Activated CD8-positive, alpha-beta memory T cell treated with anti-CD3 and anti-CD28 coated beads, Interleukin-2, amount 10 ng/mL, durations not matched to agents 7 days and 5 days (primary cell): ENCODE measurements at regions of chr18 and their contacts with region 1.

Region 1: GRCh38 chr18:3151399-3152264 is 68.1 kb downstream of the MYOM1 start:
- DNase-seq: no peak
- ATAC-seq: no peak
- H3K4me3 Mint-ChIP-seq: no peak overlapping the region
- H3K27ac Mint-ChIP-seq: no peak overlapping the region
- H3K4me1 Mint-ChIP-seq: peaks cover 1% of the 10 kb centered on the region
- H3K27me3 Mint-ChIP-seq: no peaks in the 10 kb centered on the region

Region 2: GRCh38 chr18:2923464-2923863 is 228.2 kb before region 1 on chr18:
- CTCF ChIA-PET with region 1: interaction called, 12 read pairs
- DNase-seq: no peak
- ATAC-seq: no peak
- H3K4me3 Mint-ChIP-seq: no peak overlapping the region
- H3K27ac Mint-ChIP-seq: no peak overlapping the region
- H3K4me1 Mint-ChIP-seq: no peaks in the 10 kb centered on the region
- H3K27me3 Mint-ChIP-seq: no peaks in the 10 kb centered on the region

Region 3: GRCh38 chr18:3129053-3129864 is 22.4 kb before region 1 on chr18:
- CTCF ChIA-PET with region 1: interaction called, 19 read pairs
- DNase-seq: peak; percentile 87
- ATAC-seq: peak; percentile 97
- H3K4me3 Mint-ChIP-seq: no peak overlapping the region
- H3K27ac Mint-ChIP-seq: no peak overlapping the region
- H3K4me1 Mint-ChIP-seq: peaks cover 12% of the 10 kb centered on the region
- H3K27me3 Mint-ChIP-seq: no peaks in the 10 kb centered on the region

Region 4: DNA sequence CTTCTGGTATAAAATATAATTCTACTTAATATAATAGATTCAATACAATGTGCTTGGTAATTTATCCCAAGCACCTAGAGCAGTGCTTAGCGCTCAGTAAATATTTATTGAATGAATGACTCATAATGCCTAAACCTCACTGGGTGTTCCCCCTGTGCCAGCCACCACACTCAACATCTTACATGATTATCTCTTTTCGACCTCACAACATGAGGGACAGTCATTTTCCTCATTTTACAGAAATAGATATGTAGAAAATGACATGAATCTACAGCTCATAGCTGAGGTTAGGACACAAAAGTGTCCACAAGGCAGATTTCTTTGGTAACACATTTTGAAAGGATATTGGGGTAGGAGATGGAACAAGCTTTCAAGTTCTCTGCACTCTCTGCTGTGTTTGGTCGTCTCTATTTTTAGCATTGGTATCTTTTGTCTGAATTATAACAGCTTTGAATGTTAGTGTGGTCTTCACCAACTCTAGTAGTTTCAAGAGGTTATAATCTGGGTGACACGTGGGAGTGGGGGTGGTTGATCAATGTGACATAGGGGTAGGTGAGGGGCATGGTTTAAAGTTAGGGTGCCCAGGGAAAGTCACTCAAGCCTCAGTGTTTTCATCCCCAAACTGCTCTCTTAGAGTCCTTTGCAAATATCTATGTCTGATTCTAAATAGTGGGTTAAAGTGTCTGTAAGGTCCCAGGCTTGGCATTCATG is 58.4 kb after region 1 on chr18:
- CTCF ChIA-PET with region 1: no interaction called
- DNase-seq: peak; percentile 46
- ATAC-seq: peak; percentile 68
- H3K4me3 Mint-ChIP-seq: no peak overlapping the region
- H3K27ac Mint-ChIP-seq: no peak overlapping the region
- H3K4me1 Mint-ChIP-seq: peaks cover 19% of the 10 kb centered on the region
- H3K27me3 Mint-ChIP-seq: no peaks in the 10 kb centered on the region

Region 5: DNA sequence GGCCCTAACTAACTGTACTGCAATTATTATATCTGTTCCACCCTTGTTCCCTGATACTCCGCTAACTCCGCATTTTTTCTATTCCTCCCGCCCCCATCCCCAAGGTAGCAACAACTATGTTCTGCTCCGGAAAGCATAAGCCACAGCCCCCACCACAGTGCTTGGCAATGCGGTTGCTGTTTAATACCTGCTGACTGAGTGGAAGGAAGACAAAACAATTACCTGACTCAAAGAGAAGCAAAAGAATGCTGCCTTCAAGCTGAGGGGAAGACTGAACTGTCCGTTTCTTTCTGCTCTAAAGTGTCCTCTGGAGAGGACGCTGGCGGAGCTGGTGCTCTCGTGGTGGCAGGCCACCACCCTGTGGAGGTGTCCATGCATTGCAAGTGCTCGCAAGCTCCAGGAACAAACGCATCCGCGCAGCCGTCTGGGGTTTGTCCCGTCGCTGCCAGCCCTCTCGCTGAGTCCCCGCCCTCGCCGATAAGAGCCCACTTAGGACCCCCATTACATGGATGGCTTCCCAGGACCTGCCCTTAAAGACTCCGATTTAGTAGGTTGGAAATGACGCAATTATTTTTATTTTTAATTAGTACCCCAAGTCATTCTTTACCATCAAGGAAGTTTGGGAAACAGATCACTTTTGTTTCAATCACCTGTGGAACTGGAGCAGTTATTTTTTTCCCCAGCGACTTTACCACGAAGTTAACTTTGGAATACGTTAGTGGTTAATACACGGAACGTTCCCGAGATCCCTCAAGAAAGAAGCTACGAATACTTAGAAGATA is 94.4 kb after region 1 on chr18:
- CTCF ChIA-PET with region 1: interaction called, 34 read pairs
- DNase-seq: peak; percentile 90
- ATAC-seq: peak; percentile 56
- H3K4me3 Mint-ChIP-seq: peak overlapping the region; percentile 92
- H3K27ac Mint-ChIP-seq: peak overlapping the region; percentile 99
- H3K4me1 Mint-ChIP-seq: peaks cover 24% of the 10 kb centered on the region
- H3K27me3 Mint-ChIP-seq: peaks cover 4% of the 10 kb centered on the region